Endothelial cell of umbilical vein (primary cell): ENCODE measurements at regions of chr6 and their contacts with region 1.

Region 1: DNA sequence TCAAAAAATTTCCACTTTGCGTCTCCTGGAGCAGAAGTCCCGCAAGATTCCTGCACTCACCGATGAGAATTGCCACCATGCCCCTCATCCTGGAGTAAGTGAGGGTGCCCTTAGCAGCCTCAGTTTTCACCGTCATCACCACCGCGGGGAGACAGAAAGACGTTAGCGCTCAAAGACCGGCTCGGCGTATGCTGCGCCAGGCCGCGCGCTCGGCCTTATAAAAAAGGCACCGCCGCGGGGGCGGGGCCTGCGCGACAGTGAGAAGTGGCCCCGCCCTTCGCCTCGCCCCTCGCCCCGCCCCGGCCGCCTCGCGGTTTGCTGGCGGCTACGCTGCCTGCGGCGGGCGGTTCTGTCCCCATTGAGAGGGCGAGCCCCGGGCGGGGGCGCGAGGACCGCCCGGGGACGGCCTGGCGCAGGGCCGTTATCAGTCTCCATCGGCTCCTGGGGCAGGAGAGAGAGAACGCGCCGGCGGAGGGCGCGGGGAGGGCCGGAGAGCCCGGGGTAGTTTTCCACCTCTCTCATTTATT is 122.3 kb upstream of the SLC2A12 start:
- DNase-seq: peak; percentile 90
- H3K4me3 ChIP-seq: peak overlapping the region; percentile 85 to 100 (median 98)
- H3K27ac ChIP-seq: peak overlapping the region; percentile 98
- H3K4me1 ChIP-seq: peaks cover 59% of the 10 kb centered on the region
- H3K27me3 ChIP-seq: no peaks in the 10 kb centered on the region
- CTCF ChIP-seq: no peak
- POLR2A ChIP-seq: peak; percentile 100

Region 2: DNA sequence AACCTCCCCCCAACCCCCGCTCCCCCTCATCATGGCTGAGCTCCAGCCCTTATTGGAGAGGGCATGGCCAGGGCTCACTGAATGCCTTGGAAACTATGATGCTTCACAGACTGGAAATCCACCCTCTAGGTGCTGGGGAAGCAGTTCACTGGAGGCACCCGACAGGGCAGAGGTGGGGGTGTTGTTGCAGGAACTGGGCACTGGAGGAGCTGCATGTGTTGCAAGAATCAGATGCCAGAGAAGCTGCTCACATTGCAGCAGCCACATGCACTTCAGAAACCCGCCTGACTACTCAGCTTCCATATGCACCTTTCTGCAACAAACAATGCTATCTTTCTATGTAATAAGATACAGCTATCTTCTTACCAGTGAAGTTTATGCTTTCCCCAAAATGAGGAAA is 229.6 kb before region 1 on chr6:
- CTCF ChIA-PET with region 1: no interaction called
- POLR2A ChIA-PET with region 1: no interaction called
- dilution Hi-C with region 1: no loop called
- intact Hi-C with region 1: no loop called
- DNase-seq: no peak
- H3K4me3 ChIP-seq: no peak overlapping the region
- H3K27ac ChIP-seq: no peak overlapping the region
- H3K4me1 ChIP-seq: no peaks in the 10 kb centered on the region
- H3K27me3 ChIP-seq: peaks cover 19 to 20% of the 10 kb centered on the region in 2 experiments
- CTCF ChIP-seq: no peak
- POLR2A ChIP-seq: no peak

Region 3: DNA sequence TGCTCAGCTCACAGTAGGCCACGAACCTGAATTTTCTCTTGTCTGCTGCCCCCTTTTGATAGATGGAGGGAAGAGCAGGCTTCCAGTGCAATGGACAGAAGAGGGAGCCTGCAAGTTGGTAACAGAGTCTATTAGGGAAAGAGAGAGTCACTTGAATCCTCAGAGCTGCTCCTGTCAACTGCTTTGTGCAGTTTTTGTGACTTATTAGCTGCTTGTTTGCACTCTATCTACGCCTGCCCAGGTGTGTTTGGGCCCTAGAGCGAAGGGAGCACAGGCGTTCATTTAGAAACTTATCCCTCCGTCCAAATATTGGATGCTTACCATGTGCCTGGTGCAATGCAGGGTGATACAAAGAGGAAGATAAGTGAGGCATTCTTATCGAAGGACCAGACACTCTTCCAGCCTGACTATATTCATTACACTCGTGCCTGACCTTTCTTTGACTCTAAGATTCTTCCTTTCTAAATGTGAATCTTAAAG is 110.7 kb before region 1 on chr6:
- CTCF ChIA-PET with region 1: no interaction called
- POLR2A ChIA-PET with region 1: no interaction called
- dilution Hi-C with region 1: no loop called
- intact Hi-C with region 1: no loop called
- DNase-seq: peak; percentile 80
- H3K4me3 ChIP-seq: no peak overlapping the region
- H3K27ac ChIP-seq: no peak overlapping the region
- H3K4me1 ChIP-seq: peaks cover 10% of the 10 kb centered on the region
- H3K27me3 ChIP-seq: no peaks in the 10 kb centered on the region
- CTCF ChIP-seq: peak; percentile 85 to 89
- POLR2A ChIP-seq: no peak

Region 4: DNA sequence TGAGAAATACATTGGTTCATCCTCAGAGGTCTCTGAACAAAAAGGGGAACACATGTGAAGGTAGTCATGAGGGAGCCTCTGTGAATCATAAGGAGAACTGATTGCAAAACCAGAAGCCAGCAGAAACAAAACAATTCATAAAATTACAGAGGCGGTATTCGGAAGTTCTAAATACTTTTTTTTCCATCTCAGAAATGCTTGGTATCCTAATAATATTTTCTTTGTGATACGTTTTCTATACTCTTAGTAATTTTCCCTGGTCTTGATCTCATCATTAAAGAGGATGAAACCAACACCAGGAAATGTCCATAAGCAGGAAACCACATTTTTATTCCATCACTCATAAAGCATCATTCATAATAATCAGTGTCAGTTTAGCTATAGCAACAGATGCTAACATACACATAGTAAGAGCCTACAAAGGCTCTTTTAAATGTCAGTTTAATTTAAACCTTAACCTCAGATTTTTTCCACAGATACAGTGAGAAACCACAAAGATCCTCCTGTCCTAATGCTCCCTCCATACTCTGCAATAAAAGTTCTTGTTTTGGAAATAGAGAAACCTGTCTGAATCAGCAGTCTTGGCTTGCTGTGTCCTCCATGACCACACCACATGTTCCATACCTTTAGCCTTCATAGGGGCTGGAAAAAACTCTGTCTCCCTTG is 113.9 kb after region 1 on chr6:
- CTCF ChIA-PET with region 1: interaction called, 3 read pairs
- POLR2A ChIA-PET with region 1: interaction called, 3 read pairs
- dilution Hi-C with region 1: no loop called
- intact Hi-C with region 1: loop called (anchors 1 kb)
- DNase-seq: peak; percentile 74
- H3K4me3 ChIP-seq: no peak overlapping the region
- H3K27ac ChIP-seq: peak overlapping the region; percentile 100
- H3K4me1 ChIP-seq: peaks cover 25% of the 10 kb centered on the region
- H3K27me3 ChIP-seq: no peaks in the 10 kb centered on the region
- CTCF ChIP-seq: no peak
- POLR2A ChIP-seq: peak; percentile 30

Region 5: GRCh38 chr6:134422426-134423231 is 247.9 kb after region 1 on chr6:
- CTCF ChIA-PET with region 1: interaction called, 17 read pairs
- POLR2A ChIA-PET with region 1: interaction called, 6 read pairs
- dilution Hi-C with region 1: no loop called
- intact Hi-C with region 1: loop called (anchors 1 kb)
- DNase-seq: peak; percentile 81
- H3K4me3 ChIP-seq: no peak overlapping the region
- H3K27ac ChIP-seq: peak overlapping the region; percentile 90
- H3K4me1 ChIP-seq: peaks cover 68% of the 10 kb centered on the region
- H3K27me3 ChIP-seq: no peaks in the 10 kb centered on the region
- CTCF ChIP-seq: no peak
- POLR2A ChIP-seq: peak; percentile 61

Region 6: GRCh38 chr6:134551245-134551960 is 376.7 kb after region 1 on chr6:
- CTCF ChIA-PET with region 1: interaction called, 17 read pairs
- POLR2A ChIA-PET with region 1: interaction called, 9 read pairs
- dilution Hi-C with region 1: no loop called
- intact Hi-C with region 1: loop called (anchors 1 kb)
- DNase-seq: peak; percentile 76
- H3K4me3 ChIP-seq: no peak overlapping the region
- H3K27ac ChIP-seq: peak overlapping the region; percentile 86
- H3K4me1 ChIP-seq: peaks cover 28% of the 10 kb centered on the region
- H3K27me3 ChIP-seq: no peaks in the 10 kb centered on the region
- CTCF ChIP-seq: no peak
- POLR2A ChIP-seq: no peak

Region 7: DNA sequence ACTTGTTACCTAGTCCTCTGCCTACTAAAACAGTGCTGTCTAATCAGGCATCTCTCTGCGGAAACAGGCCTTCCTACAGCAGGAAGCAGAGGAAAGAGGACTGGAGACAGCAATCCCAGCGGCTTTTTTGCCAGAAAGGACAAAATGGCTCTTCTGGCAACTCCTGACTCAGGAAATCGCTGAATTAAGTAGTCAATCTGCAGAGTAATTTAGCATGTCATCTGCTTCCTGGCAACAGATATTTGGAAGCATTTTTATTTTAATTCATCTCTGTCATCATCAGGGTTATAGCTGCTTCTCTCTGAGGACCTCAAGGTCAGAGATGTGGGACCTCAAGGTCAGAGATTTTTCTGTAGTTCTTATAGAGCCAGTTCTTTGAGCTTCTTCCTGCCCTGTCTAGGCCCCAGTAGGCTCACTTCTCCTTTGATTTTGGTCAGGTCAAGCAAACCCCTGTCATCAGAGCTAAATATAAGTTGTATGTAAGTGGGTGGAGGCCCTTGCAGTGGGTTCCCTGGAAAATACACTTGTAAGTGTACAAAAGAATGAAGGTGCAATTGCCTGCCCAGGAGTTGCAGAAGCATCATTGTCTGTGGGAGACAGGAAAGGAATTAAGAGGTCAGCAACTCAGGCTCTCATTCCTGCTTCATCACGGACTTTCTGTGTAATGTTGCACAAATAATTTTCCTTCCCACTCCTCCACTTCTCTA is 545.8 kb after region 1 on chr6:
- CTCF ChIA-PET with region 1: interaction called, 4 read pairs
- POLR2A ChIA-PET with region 1: interaction called, 3 read pairs
- dilution Hi-C with region 1: no loop called
- intact Hi-C with region 1: loop called (anchors 1 kb)
- DNase-seq: peak; percentile 94
- H3K4me3 ChIP-seq: no peak overlapping the region
- H3K27ac ChIP-seq: peak overlapping the region; percentile 74
- H3K4me1 ChIP-seq: peaks cover 37% of the 10 kb centered on the region
- H3K27me3 ChIP-seq: no peaks in the 10 kb centered on the region
- CTCF ChIP-seq: no peak
- POLR2A ChIP-seq: peak; percentile 61